Gastrocnemius medialis (tissue), 4 donors: ENCODE measurements at regions of chr7 and their contacts with region 1.

Region 1: DNA sequence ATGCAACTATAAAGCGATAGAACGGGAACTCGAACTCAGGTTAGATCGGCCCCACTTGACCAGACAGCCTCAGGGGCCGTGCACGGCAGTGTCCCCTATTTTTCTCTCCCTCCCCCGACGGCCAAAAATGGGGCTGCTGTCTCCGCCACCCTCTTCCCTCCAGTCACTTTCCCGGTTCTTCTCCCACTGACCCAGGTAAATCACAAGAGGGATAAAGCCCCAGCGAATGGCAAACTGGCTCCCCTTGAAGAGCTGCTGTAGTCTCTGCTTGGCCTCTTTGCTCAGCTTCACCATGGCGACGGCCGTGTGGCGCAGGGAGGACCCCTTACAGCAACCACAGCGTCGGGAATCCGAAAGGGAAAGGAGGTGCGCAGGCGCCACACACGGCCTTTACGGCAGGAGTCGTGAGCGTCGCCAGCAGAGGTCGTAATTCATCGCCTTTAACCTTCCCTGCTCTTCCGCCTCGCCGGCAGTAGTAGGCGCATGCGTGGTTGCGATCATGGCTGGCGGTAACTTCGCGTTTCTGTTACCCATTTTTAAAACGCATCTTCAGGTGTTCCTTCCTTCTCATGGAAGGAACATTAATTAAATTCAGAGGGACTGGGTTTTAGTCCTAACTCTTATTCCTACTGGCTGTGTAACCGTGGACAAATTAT is at the start of gene TOMM7:
- DNase-seq: peak; percentile 82 to 91
- ATAC-seq: peak; percentile 97
- H3K4me3 ChIP-seq: peak within 1 kb of the TSS; percentile 80 to 98 (median 88)
- H3K27ac ChIP-seq: peak within 1 kb of the TSS; percentile 90 to 96 (median 93)
- H3K4me1 ChIP-seq: peaks cover 36 to 44% of the 10 kb centered on the region in 2 donors
- H3K27me3 ChIP-seq: no peaks in the 10 kb centered on the region
- CTCF ChIP-seq: peak; percentile 32 to 81 (median 70)
- POLR2A ChIP-seq: peak; percentile 67 to 80
- total RNA-seq, gene TOMM7: 124 to 235 (median 218) TPM

Region 2: GRCh38 chr7:22841954-22842353 is 19.3 kb after region 1 on chr7:
- in situ Hi-C with region 1: no loop called
- intact Hi-C with region 1: loop called (anchors 2 kb)
- DNase-seq: peak; percentile 88 to 96
- ATAC-seq: peak; percentile 97
- H3K4me3 ChIP-seq: peak overlapping the region; percentile 17 to 31 (median 21)
- H3K27ac ChIP-seq: peak overlapping the region; percentile 90 to 95 (median 92)
- H3K4me1 ChIP-seq: peaks cover 13 to 14% of the 10 kb centered on the region in 2 donors
- H3K27me3 ChIP-seq: no peaks in the 10 kb centered on the region
- CTCF ChIP-seq: no peak
- POLR2A ChIP-seq: peak; percentile 75 to 84

Region 3: DNA sequence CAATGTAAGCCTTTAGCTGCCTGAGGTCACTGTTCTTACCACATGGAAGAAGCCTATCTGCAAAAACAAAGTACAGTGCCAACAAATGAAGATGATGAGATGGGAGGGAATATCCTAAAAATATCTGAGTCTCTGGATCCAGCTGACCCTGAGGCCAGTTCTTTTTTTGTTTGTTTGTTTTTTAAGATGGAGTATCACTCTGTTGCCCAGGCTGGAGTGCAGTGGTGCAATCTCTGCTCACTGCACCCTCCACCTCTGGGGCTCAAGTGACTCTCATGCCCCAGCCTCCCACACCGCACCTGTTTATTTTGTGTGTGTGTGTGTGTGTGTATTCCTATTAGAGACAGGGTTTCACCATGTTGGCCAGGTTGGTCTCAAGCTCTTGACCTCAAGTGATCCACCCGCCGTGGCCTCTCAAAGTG is 146.4 kb after region 1 on chr7:
- in situ Hi-C with region 1: no loop called
- intact Hi-C with region 1: loop called (anchors 5 kb)
- DNase-seq: peak; percentile 83 to 92
- ATAC-seq: peak; percentile 86 to 91
- H3K4me3 ChIP-seq: no peak overlapping the region
- H3K27ac ChIP-seq: peak overlapping the region; percentile 81 to 87 (median 84)
- H3K4me1 ChIP-seq: peaks cover 49% of the 10 kb centered on the region in 2 donors
- H3K27me3 ChIP-seq: no peaks in the 10 kb centered on the region
- CTCF ChIP-seq: no peak
- POLR2A ChIP-seq: peak in 1 of 2 donors; percentile 24

Region 4: DNA sequence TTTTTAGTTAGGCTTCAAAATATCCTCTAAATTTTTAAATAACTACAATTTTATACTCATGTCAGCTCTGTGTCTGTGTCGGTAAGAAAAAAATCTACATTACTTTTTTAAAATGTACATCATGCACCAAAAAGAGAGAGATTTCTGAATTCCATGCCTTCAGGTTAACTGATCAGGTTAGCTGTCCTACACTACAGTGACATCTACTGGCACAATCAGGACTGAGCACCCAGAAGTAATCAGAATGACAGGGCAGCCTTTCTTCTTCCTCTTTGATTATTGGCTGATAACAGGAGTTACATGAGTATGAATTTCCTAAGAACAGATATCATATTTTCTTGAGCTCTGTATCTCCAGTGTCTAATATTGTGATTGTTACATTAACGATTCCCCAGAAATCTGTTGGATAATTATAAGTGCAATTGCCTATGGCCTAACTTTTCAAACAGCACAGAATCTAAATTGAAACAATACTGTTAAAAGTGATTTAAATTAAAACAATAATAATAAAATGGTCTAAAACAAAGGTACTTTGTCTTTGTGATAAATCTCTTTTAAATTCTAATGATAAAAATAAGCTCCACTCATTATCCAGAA is 233.1 kb after region 1 on chr7:
- in situ Hi-C with region 1: loop called in 3 of 4 experiments (anchors 10 kb)
- intact Hi-C with region 1: loop called (anchors 2 kb)
- DNase-seq: peak; percentile 9 to 24
- ATAC-seq: peak; percentile 88 to 90
- H3K4me3 ChIP-seq: no peak overlapping the region
- H3K27ac ChIP-seq: no peak overlapping the region
- H3K4me1 ChIP-seq: no peaks in the 10 kb centered on the region
- H3K27me3 ChIP-seq: no peaks in the 10 kb centered on the region
- CTCF ChIP-seq: peak; percentile 74 to 95 (median 91)
- POLR2A ChIP-seq: no peak

Region 5: DNA sequence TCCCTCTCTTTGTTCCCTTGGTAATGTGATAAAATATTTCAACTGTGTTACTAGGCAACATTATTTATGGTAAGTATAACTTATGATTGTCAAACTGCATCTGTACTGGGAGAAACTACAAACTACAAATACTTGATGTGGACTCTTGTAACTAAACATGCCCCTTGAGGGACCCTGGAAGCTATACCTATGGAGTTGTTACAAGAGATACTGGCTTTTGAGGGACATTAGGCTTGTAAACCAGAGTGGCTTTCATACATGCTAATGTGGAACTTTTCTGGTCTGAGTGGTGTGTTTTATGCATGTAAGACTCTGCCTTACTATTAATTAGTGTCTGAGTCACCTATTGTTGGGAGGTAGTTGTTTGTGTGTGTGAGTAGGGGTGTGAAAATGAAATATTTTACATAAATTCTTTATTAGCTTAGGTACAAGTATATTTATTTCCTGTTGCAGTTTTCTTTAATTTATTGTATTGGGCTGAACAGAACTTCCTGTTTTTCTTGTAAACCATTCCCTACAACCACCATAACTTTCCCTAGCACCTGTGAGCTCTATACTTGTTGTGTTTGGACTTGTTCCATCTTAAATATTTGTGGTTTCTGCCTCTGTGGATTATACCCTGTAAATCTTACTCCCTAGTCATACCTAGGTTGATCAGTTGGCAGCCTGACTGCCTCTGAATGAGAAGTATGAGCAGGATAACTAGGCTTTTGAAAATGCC is 937.2 kb after region 1 on chr7:
- in situ Hi-C with region 1: no loop called
- intact Hi-C with region 1: no loop called
- DNase-seq: no peak
- ATAC-seq: no peak
- H3K4me3 ChIP-seq: no peak overlapping the region
- H3K27ac ChIP-seq: no peak overlapping the region
- H3K4me1 ChIP-seq: no peaks in the 10 kb centered on the region
- H3K27me3 ChIP-seq: no peaks in the 10 kb centered on the region
- CTCF ChIP-seq: no peak
- POLR2A ChIP-seq: no peak